ENCODE measurements at regions of chr6 and their contacts with region 1.

Region 1: GRCh38 chr6:45138765-45139164 is 189.4 kb upstream of the RUNX2 start:
- DNase-seq: no peak
- ATAC-seq: no peak
- H3K4me3 ChIP-seq: no peak overlapping the region
- H3K4me3 Mint-ChIP-seq: no peak overlapping the region
- H3K27ac ChIP-seq: no peak overlapping the region
- H3K27ac Mint-ChIP-seq: no peak overlapping the region
- H3K4me1 ChIP-seq: no peaks in the 10 kb centered on the region
- H3K4me1 Mint-ChIP-seq: peaks cover 0 to 4% (median 0%) of the 10 kb centered on the region in 3 donors
- H3K27me3 ChIP-seq: no peaks in the 10 kb centered on the region
- H3K27me3 Mint-ChIP-seq: no peaks in the 10 kb centered on the region

Region 2: GRCh38 chr6:45310118-45310788 is 171.5 kb after region 1 on chr6:
- CTCF ChIA-PET with region 1: no interaction called
- POLR2A ChIA-PET with region 1: no interaction called
- DNase-seq: peak in 34 of 35 experiments; percentile 6 to 69 (median 35)
- ATAC-seq: peak; percentile 90 to 95 (median 93)
- H3K4me3 ChIP-seq: peak overlapping the region in 1 of 2 donors; percentile 14
- H3K4me3 Mint-ChIP-seq: peak overlapping the region; percentile 45 to 56 (median 55)
- H3K27ac ChIP-seq: peak overlapping the region; percentile 60
- H3K27ac Mint-ChIP-seq: peak overlapping the region; percentile 71 to 89
- H3K4me1 ChIP-seq: peaks cover 16 to 19% of the 10 kb centered on the region in 2 experiments
- H3K4me1 Mint-ChIP-seq: peaks cover 42 to 72% (median 63%) of the 10 kb centered on the region in 3 donors
- H3K27me3 ChIP-seq: no peaks in the 10 kb centered on the region
- H3K27me3 Mint-ChIP-seq: no peaks in the 10 kb centered on the region

Region 3: GRCh38 chr6:45864651-45865050 is 725.9 kb after region 1 on chr6:
- CTCF ChIA-PET with region 1: no interaction called
- POLR2A ChIA-PET with region 1: interaction called in 1 of 2 experiments, 10 read pairs
- DNase-seq: no peak
- ATAC-seq: no peak
- H3K4me3 ChIP-seq: no peak overlapping the region
- H3K4me3 Mint-ChIP-seq: no peak overlapping the region
- H3K27ac ChIP-seq: no peak overlapping the region
- H3K27ac Mint-ChIP-seq: no peak overlapping the region
- H3K4me1 ChIP-seq: no peaks in the 10 kb centered on the region
- H3K4me1 Mint-ChIP-seq: no peaks in the 10 kb centered on the region
- H3K27me3 ChIP-seq: peaks cover 0 to 2% of the 10 kb centered on the region in 2 experiments
- H3K27me3 Mint-ChIP-seq: peaks cover 9 to 13% of the 10 kb centered on the region in 2 donors